ENCODE measurements at regions of chr15 and their contacts with region 1.

Region 1: DNA sequence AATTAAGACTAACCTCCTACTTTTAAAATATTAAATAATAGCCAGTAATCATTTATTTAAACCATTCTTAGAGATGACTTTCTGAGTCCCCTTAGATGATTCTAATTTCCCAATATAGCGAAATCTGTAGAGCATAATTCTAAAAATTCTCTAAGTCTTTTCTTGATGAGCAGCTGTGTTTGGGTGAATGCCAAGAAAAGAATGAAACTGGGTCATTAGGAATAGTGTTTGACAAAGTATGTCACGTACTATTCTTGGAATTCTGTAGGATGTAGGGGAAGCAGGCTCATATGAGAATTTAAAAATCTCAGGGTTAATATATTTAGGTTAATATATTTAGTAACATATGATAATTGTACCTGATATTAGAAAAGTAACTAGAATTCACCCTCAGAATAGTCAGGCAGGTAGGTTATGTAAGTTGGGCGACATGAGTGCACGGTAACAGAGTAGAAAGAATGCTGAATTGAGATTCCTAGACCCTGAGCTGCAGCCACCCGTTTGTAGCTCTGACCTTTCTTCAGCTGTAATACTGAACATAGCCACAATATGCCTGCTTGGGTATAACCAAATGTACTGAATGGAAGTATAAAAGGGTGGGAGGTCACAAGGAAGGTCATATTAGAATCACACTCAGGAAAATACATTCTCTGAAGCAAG is 524.3 kb downstream of the UNC13C start:
- DNase-seq: no peak
- ATAC-seq: no peak
- H3K4me3 ChIP-seq: no peak overlapping the region
- H3K27ac ChIP-seq: no peak overlapping the region
- H3K4me1 ChIP-seq: no peaks in the 10 kb centered on the region
- H3K27me3 ChIP-seq: no peaks in the 10 kb centered on the region
- CTCF ChIP-seq: no peak
- POLR2A ChIP-seq: no peak

Region 2: DNA sequence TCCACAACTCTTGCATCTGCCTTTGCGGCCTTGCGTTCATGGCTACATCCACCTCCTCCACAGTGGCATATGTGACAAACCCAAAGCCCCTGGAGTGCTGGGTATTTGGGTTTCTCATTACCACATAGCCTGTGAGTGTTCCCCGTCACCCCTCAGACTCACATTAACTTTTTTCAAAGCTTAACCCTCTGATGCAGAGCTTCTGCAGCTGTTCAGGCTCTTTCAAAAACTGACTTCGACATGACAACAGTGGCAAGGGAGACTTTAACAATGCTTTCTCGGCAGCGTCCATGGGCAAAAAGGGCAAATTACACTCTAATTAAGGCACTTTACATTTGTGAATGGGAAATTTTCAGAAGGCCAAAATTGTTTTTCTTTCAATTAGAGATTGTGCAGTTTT is 181.1 kb before region 1 on chr15:
- intact Hi-C with region 1: no loop called
- DNase-seq: no peak
- ATAC-seq: no peak
- H3K4me3 ChIP-seq: no peak overlapping the region
- H3K27ac ChIP-seq: no peak overlapping the region
- H3K4me1 ChIP-seq: no peaks in the 10 kb centered on the region
- H3K27me3 ChIP-seq: no peaks in the 10 kb centered on the region
- CTCF ChIP-seq: no peak
- POLR2A ChIP-seq: no peak

Region 3: GRCh38 chr15:54540721-54541120 is 38.2 kb after region 1 on chr15:
- intact Hi-C with region 1: no loop called
- DNase-seq: no peak
- ATAC-seq: no peak
- H3K4me3 ChIP-seq: no peak overlapping the region
- H3K27ac ChIP-seq: no peak overlapping the region
- H3K4me1 ChIP-seq: no peaks in the 10 kb centered on the region
- H3K27me3 ChIP-seq: no peaks in the 10 kb centered on the region
- CTCF ChIP-seq: no peak
- POLR2A ChIP-seq: no peak

Region 4: DNA sequence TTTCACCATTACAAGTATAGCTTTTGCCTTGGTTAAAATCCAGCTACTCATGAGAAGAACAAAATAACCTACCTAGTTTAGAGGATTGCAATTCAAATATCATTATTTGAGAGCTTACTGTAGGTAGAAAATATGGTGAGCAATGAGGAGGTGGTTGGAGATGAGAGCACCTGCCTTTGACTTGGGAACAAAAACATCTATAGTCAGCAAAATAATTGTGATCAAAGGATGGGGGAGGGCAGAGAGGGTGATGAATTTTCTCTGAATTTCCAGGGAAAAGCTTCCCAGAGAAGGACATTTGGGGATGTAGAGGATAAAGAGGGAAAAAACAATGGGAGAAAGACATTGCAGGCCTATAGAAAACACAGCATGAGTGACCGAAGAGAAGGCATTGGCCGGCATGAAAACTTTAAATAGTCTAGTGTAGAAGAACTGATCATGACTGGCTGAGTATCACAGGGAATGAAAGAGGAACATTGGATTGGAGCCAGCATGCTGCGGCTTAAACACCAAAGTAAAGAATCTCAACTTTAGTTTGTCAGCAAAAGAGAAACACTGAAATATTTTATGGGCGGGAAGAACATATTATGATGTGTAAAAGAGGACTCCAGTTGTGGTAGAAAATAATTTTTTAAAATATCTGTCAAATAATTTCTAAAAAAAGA is 57.0 kb after region 1 on chr15:
- intact Hi-C with region 1: loop called in 1 of 10 experiments (anchors 10 kb)
- DNase-seq: peak in 4 of 5 donors; percentile 20 to 46 (median 24)
- ATAC-seq: no peak
- H3K4me3 ChIP-seq: no peak overlapping the region
- H3K27ac ChIP-seq: no peak overlapping the region
- H3K4me1 ChIP-seq: no peaks in the 10 kb centered on the region
- H3K27me3 ChIP-seq: no peaks in the 10 kb centered on the region
- CTCF ChIP-seq: no peak
- POLR2A ChIP-seq: no peak